Right ventricle myocardium superior (tissue), 1 donor: ENCODE measurements at regions of chr4 and their contacts with region 1.

Region 1: GRCh38 chr4:17414392-17414791 is 97.5 kb downstream of the QDPR start:
- DNase-seq: no peak
- ATAC-seq: no peak

Region 2: GRCh38 chr4:17258106-17258505 is 156.3 kb before region 1 on chr4:
- intact Hi-C with region 1: no loop called
- DNase-seq: no peak
- ATAC-seq: no peak

Region 3: DNA sequence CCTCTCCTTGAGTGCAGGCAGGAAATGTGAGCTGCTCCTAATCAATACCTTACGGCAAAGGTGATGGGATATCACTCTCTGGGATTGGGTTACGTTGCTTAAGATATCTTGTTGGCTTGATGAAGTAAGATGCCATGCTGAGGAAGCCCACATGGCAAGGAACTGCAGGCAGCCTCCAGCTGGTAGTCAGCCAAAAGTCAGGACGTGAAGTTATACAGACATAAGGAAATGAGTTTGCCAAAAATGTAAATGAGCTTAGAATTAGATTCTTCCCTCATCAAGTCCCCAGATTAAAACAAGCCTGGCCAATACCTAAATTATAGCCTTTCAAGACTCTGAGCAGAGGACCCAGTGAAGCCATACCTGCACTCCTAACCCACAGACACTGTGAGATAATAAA is 57.5 kb before region 1 on chr4:
- intact Hi-C with region 1: loop called (anchors 5 kb)
- DNase-seq: no peak
- ATAC-seq: no peak

Region 4: GRCh38 chr4:17576932-17577665 is 162.7 kb after region 1 on chr4 and contains the start of gene LAP3:
- intact Hi-C with region 1: no loop called
- DNase-seq: peak; percentile 99
- ATAC-seq: peak; percentile 99
- total RNA-seq, gene LAP3: 52.6 TPM